Dorsolateral prefrontal cortex (tissue), 120 donors: ENCODE measurements at regions of chr17 and their contacts with region 1.

Region 1: GRCh38 chr17:7561028-7561575 is 617 bp upstream of the SENP3 start:
- DNase-seq: peak; percentile 82 to 94 (median 90)
- H3K4me3 ChIP-seq: peak overlapping the region; percentile 63 to 100 (median 96)
- H3K27ac ChIP-seq: peak overlapping the region; percentile 72 to 98 (median 94)
- H3K27me3 ChIP-seq: no peaks in the 10 kb centered on the region
- CTCF ChIP-seq: peak; percentile 55 to 92 (median 81)

Region 2: GRCh38 chr17:7329374-7329996 is 231.6 kb before region 1 on chr17:
- intact Hi-C with region 1: loop called in 1 of 2 experiments (anchors 5 kb)
- DNase-seq: peak; percentile 95 to 98 (median 96)
- H3K4me3 ChIP-seq: peak overlapping the region; percentile 69 to 100 (median 94)
- H3K27ac ChIP-seq: peak overlapping the region; percentile 65 to 98 (median 92)
- H3K27me3 ChIP-seq: no peaks in the 10 kb centered on the region
- CTCF ChIP-seq: peak in 36 of 56 donors; percentile 8 to 57 (median 32)

Region 3: DNA sequence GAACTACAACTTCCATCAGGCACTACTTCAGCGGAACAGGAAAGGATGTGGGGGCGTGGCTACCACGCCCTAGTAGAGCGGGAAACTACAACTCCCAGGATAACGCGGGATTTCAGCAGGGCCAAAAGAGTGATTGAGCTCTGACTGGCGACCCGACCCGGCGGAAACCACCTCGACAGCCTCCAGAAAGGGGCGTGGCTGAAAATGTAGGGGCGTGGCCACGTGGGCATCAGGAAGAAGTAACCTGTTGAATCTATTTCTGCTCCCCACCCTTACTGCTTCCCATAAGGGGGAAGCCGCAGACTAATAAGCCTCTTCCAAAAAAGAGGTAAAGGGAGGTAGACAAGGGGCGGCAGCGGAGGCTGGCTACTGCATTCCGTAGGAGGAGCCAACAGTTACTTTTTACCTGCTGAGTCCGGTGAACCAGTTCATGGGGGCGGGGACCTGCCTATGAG is 125.9 kb before region 1 on chr17 and contains the start of gene TMEM102:
- intact Hi-C with region 1: loop called (anchors 2 to 5 kb)
- DNase-seq: peak; percentile 78 to 96 (median 92)
- H3K4me3 ChIP-seq: peak within 1 kb of the TSS in 58 of 59 donors; percentile 28 to 74 (median 52)
- H3K27ac ChIP-seq: peak within 1 kb of the TSS in 23 of 59 donors; percentile 5 to 79 (median 30)
- H3K27me3 ChIP-seq: peaks cover 0 to 58% (median 33%) of the 10 kb centered on the region in 45 donors
- CTCF ChIP-seq: peak in 21 of 56 donors; percentile 8 to 54 (median 19)
- total RNA-seq, gene TMEM102: 0.24 to 3.3 (median 0.97) TPM in 113 of 120 experiments, not detected in the others

Region 4: DNA sequence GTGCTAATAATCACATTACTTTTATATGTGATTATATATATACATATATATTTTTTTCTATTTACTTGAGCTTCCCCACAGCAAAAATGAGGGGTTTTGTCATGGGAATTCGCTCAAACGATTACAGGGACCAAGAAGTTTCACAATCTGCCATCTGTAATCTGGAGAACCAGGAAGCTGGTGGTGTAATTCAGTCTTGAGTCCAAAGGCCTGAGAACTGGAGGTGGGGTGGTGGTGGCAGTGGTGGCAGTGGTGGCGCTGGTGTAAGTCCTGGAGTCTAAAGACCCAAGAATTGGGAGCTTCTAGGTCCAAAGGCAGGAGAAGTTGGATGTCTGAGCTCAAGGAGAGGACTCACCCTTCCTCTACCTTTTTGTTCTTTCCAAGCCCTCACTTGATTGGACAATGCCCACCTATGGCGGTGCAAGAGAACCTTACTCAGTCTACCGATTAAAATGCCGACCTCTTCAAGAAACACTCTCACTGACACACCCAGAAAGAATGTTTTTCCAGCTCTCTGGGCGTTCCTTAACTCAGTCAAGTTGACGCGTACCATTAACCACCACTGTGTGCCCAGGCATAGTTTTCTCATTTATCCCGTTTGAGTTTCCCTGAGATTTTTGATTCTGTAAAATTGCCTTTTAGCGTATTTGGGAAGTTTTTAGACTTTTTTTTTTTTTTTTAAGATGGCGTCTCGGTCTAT is 45.0 kb before region 1 on chr17:
- intact Hi-C with region 1: loop called (anchors 2 kb)
- DNase-seq: no peak
- H3K4me3 ChIP-seq: no peak overlapping the region
- H3K27ac ChIP-seq: peak overlapping the region in 2 of 59 donors; percentile 15 to 33
- H3K27me3 ChIP-seq: no peaks in the 10 kb centered on the region
- CTCF ChIP-seq: no peak

Region 5: DNA sequence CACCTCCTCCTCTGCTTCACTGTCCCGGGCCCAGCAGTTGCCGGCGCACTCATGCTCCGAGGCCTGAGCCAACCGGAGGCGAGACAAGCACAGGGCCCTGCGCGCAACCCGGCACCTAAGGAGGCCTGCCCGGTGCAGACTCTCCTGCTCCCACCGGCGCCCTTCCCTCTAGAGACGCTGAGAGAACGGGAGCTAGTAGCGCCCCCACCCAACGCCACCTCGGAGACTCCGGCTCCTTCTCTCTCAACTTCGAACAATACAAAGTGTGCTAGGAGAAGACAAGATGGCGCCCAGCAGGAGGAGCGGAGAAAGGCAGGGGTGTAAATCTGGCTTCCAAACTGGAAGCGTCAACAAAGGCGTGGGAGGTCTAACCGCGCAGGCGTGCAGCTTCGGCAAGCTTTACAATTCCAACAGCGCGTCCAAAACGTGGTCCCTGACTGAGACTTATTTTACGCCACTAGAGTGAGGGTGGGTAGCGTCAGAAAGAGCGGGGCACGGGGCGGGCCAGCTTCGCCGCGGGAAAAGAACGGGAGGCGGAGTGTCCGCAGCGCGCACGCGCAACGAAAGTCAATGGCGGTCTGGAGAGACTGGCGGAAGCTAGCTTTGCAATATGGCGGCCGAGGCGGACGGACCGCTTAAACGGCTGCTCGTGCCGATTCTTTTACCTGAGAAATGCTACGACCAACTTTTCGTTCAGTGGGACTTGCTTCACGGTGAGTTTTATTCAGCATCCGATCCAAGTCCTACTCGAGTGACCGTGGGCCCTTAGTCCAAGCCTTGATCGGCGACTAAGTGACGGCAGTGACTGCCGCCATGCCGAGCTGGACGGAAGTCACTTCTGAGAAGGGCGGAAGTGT is 22.4 kb after region 1 on chr17 and contains the start of gene MPDU1:
- intact Hi-C with region 1: no loop called
- DNase-seq: peak; percentile 89 to 97 (median 96)
- H3K4me3 ChIP-seq: peak within 1 kb of the TSS; percentile 48 to 91 (median 72)
- H3K27ac ChIP-seq: peak within 1 kb of the TSS; percentile 91 to 100 (median 99)
- H3K27me3 ChIP-seq: no peaks in the 10 kb centered on the region
- CTCF ChIP-seq: peak in 34 of 56 donors; percentile 6 to 54 (median 28)
- total RNA-seq, gene MPDU1: 25.1 to 53.7 (median 34.4) TPM